AG04450 (cell line): ENCODE measurements at regions of chr19 and their contacts with region 1.

Region 1: DNA sequence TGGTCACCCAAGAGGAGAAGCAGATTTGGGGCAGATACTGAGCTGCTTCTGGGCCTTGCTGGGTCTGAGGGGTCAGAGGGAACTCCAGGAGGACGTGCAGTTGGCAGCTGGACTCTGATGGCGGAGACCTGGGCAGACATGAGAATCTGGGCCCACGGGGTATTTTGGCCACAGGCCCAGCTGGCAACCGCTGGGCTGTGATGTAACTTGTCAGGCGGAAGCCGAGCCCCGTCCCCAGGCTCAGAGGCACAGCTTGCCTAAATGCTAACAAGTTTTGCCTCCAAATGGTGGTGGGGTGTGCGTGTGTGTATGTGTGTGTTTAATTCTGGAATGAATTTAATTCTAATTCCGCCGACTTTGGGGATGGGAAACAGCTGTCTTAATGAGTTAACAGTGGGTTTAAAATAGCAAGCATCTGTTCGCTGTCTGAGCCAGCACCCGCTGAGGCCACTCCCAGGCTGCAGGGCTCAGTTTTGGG is 11.6 kb downstream of the ZNRF4 start:
- DNase-seq: no peak
- H3K4me3 ChIP-seq: no peak overlapping the region
- H3K27ac ChIP-seq: no peak overlapping the region
- H3K27me3 ChIP-seq: peaks cover 15% of the 10 kb centered on the region
- CTCF ChIP-seq: no peak

Region 2: GRCh38 chr19:4831304-4831978 is 635.4 kb before region 1 on chr19 and contains the start of gene TICAM1:
- CTCF ChIA-PET with region 1: interaction called, 10 read pairs
- POLR2A ChIA-PET with region 1: no interaction called
- DNase-seq: no peak
- H3K4me3 ChIP-seq: peak within 1 kb of the TSS; percentile 84
- H3K27ac ChIP-seq: no peak within 1 kb of the TSS
- H3K27me3 ChIP-seq: no peaks in the 10 kb centered on the region
- CTCF ChIP-seq: no peak
- polyA plus RNA-seq, gene TICAM1: 1.0 and 2.9 TPM in 2 replicates

Region 3: GRCh38 chr19:5232798-5233505 is 233.9 kb before region 1 on chr19:
- CTCF ChIA-PET with region 1: no interaction called
- POLR2A ChIA-PET with region 1: interaction called, 11 read pairs
- DNase-seq: no peak
- H3K4me3 ChIP-seq: no peak overlapping the region
- H3K27ac ChIP-seq: no peak overlapping the region
- H3K27me3 ChIP-seq: no peaks in the 10 kb centered on the region
- CTCF ChIP-seq: no peak

Region 4: GRCh38 chr19:5484398-5485285 is 17.8 kb after region 1 on chr19:
- CTCF ChIA-PET with region 1: no interaction called
- POLR2A ChIA-PET with region 1: no interaction called
- DNase-seq: peak; percentile 33
- H3K4me3 ChIP-seq: no peak overlapping the region
- H3K27ac ChIP-seq: no peak overlapping the region
- H3K27me3 ChIP-seq: peaks cover 3% of the 10 kb centered on the region
- CTCF ChIP-seq: no peak